ENCODE measurements at regions of chr3 and their contacts with region 1.

Region 1: DNA sequence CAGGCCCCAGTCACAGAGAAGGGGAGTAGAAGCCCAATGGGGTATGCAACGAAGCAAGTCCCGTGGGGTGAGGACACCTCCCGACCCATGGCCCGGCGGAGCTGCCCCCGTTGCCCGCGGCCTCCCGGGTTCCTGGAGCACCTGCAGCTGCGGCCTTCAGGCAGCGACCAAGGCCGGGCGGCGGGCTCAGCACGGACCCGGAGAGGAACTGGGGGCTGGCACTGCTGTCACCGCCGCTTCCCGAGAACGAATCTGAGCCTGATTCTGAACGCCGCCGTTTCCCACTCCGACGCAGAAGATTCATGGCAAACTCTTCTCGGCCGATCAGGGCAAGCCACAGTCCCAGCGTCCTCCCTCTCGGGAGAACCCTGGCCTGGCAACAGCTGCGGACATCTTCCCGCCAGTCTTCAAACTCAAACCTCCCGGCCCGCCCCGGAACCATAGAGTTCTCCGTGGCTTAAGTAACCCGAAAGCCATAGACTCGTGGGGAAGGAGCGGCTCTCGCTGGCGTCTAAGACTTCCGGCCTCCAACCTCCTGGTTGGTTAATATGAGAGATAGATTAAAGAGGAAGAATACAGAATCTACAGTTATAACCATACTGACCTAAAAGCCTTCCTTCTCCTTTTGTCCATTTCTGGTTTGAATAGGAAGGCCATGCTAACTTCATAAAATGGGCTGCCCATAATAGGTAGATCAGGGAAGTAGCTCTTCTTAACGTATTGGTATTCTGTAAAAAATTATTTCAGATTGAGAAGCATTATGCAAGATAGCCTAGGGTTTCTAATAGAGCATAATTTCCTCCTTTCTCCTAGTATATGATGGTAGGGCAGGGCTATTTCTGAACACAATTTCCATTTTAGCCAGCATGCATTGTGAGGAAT is at the start of gene POLQ:
- DNase-seq: peak; percentile 76 to 94 (median 84)
- ATAC-seq: peak; percentile 99
- H3K4me3 ChIP-seq: peak within 1 kb of the TSS; percentile 66
- H3K4me3 Mint-ChIP-seq: peak within 1 kb of the TSS; percentile 85
- H3K27ac ChIP-seq: peak within 1 kb of the TSS; percentile 49 to 59
- H3K27ac Mint-ChIP-seq: peak within 1 kb of the TSS; percentile 82
- H3K4me1 ChIP-seq: peaks cover 8% of the 10 kb centered on the region
- H3K4me1 Mint-ChIP-seq: peaks cover 14% of the 10 kb centered on the region
- H3K27me3 ChIP-seq: no peaks in the 10 kb centered on the region
- H3K27me3 Mint-ChIP-seq: no peaks in the 10 kb centered on the region
- CTCF ChIP-seq: no peak
- total RNA-seq, gene POLQ: 0.17 to 0.30 TPM

Region 2: GRCh38 chr3:121749276-121750086 is 203.7 kb after region 1 on chr3 and contains the start of gene GOLGB1:
- CTCF ChIA-PET with region 1: no interaction called
- POLR2A ChIA-PET with region 1: no interaction called
- intact Hi-C with region 1: loop called in 1 of 2 experiments (anchors 5 kb)
- DNase-seq: peak; percentile 80 to 99 (median 86)
- ATAC-seq: peak; percentile 95
- H3K4me3 ChIP-seq: peak within 1 kb of the TSS; percentile 77
- H3K4me3 Mint-ChIP-seq: no peak within 1 kb of the TSS
- H3K27ac ChIP-seq: peak within 1 kb of the TSS; percentile 92 to 96
- H3K27ac Mint-ChIP-seq: no peak within 1 kb of the TSS
- H3K4me1 ChIP-seq: peaks cover 17% of the 10 kb centered on the region
- H3K4me1 Mint-ChIP-seq: peaks cover 5% of the 10 kb centered on the region
- H3K27me3 ChIP-seq: no peaks in the 10 kb centered on the region
- H3K27me3 Mint-ChIP-seq: peaks cover 12% of the 10 kb centered on the region
- CTCF ChIP-seq: no peak
- total RNA-seq, gene GOLGB1: 49.8 to 50.2 TPM

Region 3: DNA sequence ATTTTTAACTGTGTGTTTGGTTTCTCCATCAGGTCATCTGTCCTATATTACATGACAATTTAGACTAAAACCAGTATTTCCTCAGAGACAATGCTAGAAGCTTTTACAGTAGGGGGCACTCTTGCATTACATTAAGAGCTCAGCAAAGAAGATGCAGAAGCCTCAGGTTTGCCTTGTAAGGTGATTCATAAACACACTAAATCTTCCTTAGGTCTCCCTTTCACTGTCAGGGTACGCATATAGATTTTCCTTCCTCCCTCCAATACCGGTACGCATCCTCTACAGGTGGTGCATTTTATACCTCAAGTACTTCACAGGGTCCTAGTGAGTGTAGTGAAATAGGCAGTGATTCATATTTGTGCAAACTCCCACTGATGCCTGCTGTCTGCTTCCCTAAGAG is 555.8 kb after region 1 on chr3:
- CTCF ChIA-PET with region 1: no interaction called
- POLR2A ChIA-PET with region 1: no interaction called
- intact Hi-C with region 1: loop called (anchors 2 to 5 kb)
- DNase-seq: peak in 4 of 14 experiments; percentile 11 to 76 (median 74)
- ATAC-seq: no peak
- H3K4me3 ChIP-seq: no peak overlapping the region
- H3K4me3 Mint-ChIP-seq: no peak overlapping the region
- H3K27ac ChIP-seq: no peak overlapping the region
- H3K27ac Mint-ChIP-seq: no peak overlapping the region
- H3K4me1 ChIP-seq: peaks cover 4% of the 10 kb centered on the region
- H3K4me1 Mint-ChIP-seq: peaks cover 16% of the 10 kb centered on the region
- H3K27me3 ChIP-seq: no peaks in the 10 kb centered on the region
- H3K27me3 Mint-ChIP-seq: no peaks in the 10 kb centered on the region
- CTCF ChIP-seq: peak; percentile 41

Region 4: GRCh38 chr3:122564155-122564912 is 1018.5 kb after region 1 on chr3 and contains the starts of genes DTX3L and PARP9:
- CTCF ChIA-PET with region 1: no interaction called
- POLR2A ChIA-PET with region 1: no interaction called
- intact Hi-C with region 1: loop called (anchors 5 to 10 kb)
- DNase-seq: peak; percentile 47 to 95 (median 76)
- ATAC-seq: peak; percentile 91
- H3K4me3 ChIP-seq: peak within 1 kb of the TSS; percentile 92
- H3K4me3 Mint-ChIP-seq: peak within 1 kb of the TSS; percentile 95
- H3K27ac ChIP-seq: peak within 1 kb of the TSS; percentile 83 to 88
- H3K27ac Mint-ChIP-seq: peak within 1 kb of the TSS; percentile 89
- H3K4me1 ChIP-seq: peaks cover 67% of the 10 kb centered on the region
- H3K4me1 Mint-ChIP-seq: peaks cover 85% of the 10 kb centered on the region
- H3K27me3 ChIP-seq: no peaks in the 10 kb centered on the region
- H3K27me3 Mint-ChIP-seq: no peaks in the 10 kb centered on the region
- CTCF ChIP-seq: no peak
- total RNA-seq, gene DTX3L: 15.4 to 18.6 TPM
- total RNA-seq, gene PARP9: 13.2 to 14.4 TPM

Region 5: GRCh38 chr3:123201566-123202427 is 1656.0 kb after region 1 on chr3 and contains the start of gene SEC22A:
- CTCF ChIA-PET with region 1: no interaction called
- POLR2A ChIA-PET with region 1: interaction called, 4 read pairs
- intact Hi-C with region 1: loop called in 1 of 2 experiments (anchors 5 kb)
- DNase-seq: peak; percentile 88 to 99 (median 94)
- ATAC-seq: peak; percentile 95
- H3K4me3 ChIP-seq: peak within 1 kb of the TSS; percentile 88
- H3K4me3 Mint-ChIP-seq: peak within 1 kb of the TSS; percentile 89
- H3K27ac ChIP-seq: peak within 1 kb of the TSS; percentile 96 to 98
- H3K27ac Mint-ChIP-seq: peak within 1 kb of the TSS; percentile 98
- H3K4me1 ChIP-seq: peaks cover 20% of the 10 kb centered on the region
- H3K4me1 Mint-ChIP-seq: peaks cover 44% of the 10 kb centered on the region
- H3K27me3 ChIP-seq: no peaks in the 10 kb centered on the region
- H3K27me3 Mint-ChIP-seq: no peaks in the 10 kb centered on the region
- CTCF ChIP-seq: no peak
- total RNA-seq, gene SEC22A: 7.9 to 11.5 TPM

Measured in CD4-positive, alpha-beta T cell (primary cell).